Right ventricle myocardium inferior (tissue), 1 donor: ENCODE measurements at regions of chr1 and their contacts with region 1.

Region 1: DNA sequence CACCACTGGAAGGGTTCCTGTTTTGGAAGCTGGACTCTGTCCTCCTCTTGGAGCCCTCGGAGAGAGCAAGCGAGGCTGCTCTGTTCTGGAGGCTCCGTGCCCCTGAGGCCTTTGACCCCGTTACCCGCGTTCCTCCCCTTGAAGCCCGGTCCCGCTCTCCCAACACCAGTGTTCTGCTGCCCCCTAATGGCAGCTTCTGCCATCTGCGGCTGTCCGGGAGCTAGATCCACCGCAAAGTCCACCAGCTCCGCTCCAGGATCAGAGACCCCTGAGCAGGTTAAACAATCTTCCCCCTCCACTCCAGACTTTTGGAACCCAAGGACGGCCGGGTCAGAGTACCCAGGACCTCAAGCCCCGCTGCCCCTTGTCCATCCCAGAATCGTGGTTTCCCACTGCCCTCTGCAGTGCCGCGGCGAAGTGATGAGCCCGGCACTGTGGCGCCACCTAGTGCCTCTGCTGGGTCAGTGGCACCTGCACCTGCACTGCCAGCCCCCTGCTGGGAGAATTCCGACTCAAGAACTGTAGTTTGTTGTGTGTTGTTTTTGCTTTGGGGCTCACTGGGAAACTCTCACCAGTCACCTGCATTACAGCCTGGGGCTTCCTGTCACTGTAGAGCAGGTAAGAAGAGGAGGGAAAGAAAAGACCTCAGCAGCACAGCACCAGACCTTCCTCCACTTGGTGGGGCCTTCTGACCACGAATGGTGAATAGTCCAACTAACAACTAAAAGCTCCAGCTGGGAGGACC is 63.5 kb upstream of the NFASC start:
- DNase-seq: peak; percentile 87
- ATAC-seq: peak; percentile 91

Region 2: DNA sequence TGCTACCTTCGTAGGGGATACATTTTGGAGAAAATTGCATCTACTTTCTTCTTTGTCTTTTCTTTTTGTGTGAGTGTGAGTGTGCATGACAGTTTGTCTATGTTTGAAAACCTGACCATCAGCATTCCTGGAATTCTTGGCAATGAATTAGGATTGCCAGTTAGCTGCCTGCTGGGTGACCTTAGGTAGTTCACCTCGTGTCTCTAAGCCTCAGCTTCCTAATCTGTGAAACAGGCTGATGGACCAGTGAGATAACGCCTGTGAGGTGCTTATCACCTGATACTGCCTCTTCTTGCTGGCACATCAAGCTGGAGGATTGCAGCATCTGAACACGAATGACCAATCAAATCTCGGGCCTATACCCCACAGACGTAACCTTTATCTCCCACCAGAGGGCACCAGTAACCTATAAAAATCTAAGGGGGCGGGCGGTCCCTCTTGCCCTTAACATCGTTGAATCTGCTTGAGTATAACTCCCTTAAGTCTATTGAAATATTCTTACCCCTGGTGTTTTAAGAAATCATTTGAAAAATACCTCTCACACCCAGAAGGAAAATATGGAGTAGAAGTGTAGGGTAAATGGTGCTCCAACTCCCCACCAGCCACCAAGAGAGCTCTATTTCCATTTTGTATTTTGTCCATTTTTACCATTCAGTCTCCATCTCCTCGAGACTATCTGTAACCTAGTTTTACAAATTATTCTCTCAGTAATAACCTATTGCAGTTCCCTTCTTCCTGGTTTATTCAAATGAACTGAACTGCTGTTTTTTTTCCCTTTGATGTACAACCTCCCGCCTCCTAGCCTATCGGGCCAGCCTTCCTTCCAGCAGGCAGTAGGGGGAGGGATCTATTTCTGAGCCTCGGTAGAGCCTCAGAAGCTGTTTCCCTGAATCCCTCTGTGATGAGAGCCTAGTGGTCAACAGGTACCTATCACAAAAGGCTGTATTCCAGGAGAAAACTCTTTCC is 241.2 kb before region 1 on chr1:
- intact Hi-C with region 1: loop called (anchors 1 kb)
- DNase-seq: no peak
- ATAC-seq: peak; percentile 82

Region 3: DNA sequence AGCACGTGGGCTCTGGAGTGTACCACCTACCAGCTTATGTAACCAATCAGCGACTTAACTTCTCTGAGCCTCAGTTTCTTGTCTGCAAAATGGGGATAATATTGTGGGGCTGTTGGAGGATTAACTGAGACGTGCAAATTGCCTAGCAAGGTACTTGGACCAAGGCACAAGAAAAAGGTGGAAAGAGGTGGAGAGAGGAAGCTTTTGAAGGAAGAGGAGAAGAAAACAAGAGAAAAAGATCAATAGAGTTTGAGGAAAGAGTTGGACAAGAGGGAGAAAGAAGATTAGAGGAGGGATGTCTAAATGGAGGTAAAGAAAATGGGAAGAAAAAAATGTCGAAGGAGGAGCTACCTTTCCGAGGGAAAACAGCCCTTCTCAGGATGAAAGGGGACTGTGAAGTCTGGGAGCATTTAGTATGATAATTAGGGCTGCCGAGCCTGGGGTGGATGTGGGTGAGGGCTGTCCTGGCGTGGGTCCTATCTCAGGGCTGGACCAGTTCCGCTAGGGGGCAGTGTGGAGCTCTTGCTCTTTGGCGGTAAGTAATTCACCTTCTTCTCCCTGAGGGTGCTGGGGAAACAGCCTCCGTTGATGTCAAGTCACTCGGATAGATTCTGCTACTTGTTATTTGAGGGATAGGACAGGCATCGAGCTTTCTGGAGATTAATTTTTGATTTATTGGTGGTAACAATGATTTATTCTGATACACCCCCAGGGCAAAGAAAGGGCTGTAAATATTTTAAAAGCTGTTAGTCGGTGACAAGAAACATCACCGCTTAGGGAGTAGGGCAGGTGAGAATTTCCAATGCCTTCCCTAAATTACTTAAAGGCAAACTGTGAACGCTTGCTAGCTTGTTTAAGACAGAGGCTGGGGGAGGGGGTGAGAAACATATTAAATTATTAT is 15.4 kb before region 1 on chr1:
- intact Hi-C with region 1: no loop called
- DNase-seq: peak; percentile 77
- ATAC-seq: no peak

Region 4: GRCh38 chr1:204941421-204942338 is 134.6 kb after region 1 on chr1:
- intact Hi-C with region 1: loop called (anchors 1 kb)
- DNase-seq: peak; percentile 84
- ATAC-seq: peak; percentile 71

Region 5: GRCh38 chr1:205061665-205062069 is 254.6 kb after region 1 on chr1:
- intact Hi-C with region 1: loop called (anchors 5 kb)
- DNase-seq: no peak
- ATAC-seq: peak; percentile 49